ENCODE measurements at regions of chr6 and their contacts with region 1.

Region 1: GRCh38 chr6:73461537-73462350 is at the start of gene MTO1:
- DNase-seq: no peak
- ATAC-seq: peak; percentile 96
- H3K4me3 ChIP-seq: peak within 1 kb of the TSS; percentile 92
- H3K27ac ChIP-seq: peak within 1 kb of the TSS; percentile 87
- H3K4me1 ChIP-seq: peaks cover 10% of the 10 kb centered on the region
- H3K27me3 ChIP-seq: no peaks in the 10 kb centered on the region
- CTCF ChIP-seq: no peak
- EP300 ChIP-seq: no peak
- POLR2A ChIP-seq: peak; percentile 89
- RAD21 ChIP-seq: no peak
- polyA plus RNA-seq, gene MTO1: 24.8 to 28.0 TPM

Region 2: DNA sequence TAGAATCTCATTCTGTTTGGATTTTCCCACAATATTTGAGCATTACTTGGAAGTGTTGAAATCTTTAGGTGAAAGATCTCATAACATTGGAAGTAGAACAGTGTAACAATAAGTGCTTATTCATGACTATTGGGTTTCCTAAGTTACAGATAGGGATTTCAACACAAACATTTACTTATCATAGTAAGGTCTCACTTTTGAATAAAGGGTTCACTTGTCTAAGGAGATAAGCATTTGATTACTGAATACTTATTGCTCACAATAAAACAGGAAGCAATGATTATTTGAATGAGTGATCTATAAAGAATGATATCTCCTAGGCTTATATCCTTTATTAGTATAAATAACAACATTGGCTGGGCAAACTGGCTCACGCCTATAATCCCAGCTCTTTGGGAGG is 52.3 kb before region 1 on chr6:
- CTCF ChIA-PET with region 1: no interaction called
- POLR2A ChIA-PET with region 1: no interaction called
- RAD21 ChIA-PET with region 1: no interaction called
- SMC1A ChIA-PET with region 1: no interaction called
- in situ Hi-C with region 1: no loop called
- intact Hi-C with region 1: no loop called
- DNase-seq: no peak
- ATAC-seq: no peak
- H3K4me3 ChIP-seq: no peak overlapping the region
- H3K27ac ChIP-seq: no peak overlapping the region
- H3K4me1 ChIP-seq: no peaks in the 10 kb centered on the region
- H3K27me3 ChIP-seq: no peaks in the 10 kb centered on the region
- CTCF ChIP-seq: no peak
- EP300 ChIP-seq: no peak
- POLR2A ChIP-seq: no peak
- RAD21 ChIP-seq: no peak

Region 3: DNA sequence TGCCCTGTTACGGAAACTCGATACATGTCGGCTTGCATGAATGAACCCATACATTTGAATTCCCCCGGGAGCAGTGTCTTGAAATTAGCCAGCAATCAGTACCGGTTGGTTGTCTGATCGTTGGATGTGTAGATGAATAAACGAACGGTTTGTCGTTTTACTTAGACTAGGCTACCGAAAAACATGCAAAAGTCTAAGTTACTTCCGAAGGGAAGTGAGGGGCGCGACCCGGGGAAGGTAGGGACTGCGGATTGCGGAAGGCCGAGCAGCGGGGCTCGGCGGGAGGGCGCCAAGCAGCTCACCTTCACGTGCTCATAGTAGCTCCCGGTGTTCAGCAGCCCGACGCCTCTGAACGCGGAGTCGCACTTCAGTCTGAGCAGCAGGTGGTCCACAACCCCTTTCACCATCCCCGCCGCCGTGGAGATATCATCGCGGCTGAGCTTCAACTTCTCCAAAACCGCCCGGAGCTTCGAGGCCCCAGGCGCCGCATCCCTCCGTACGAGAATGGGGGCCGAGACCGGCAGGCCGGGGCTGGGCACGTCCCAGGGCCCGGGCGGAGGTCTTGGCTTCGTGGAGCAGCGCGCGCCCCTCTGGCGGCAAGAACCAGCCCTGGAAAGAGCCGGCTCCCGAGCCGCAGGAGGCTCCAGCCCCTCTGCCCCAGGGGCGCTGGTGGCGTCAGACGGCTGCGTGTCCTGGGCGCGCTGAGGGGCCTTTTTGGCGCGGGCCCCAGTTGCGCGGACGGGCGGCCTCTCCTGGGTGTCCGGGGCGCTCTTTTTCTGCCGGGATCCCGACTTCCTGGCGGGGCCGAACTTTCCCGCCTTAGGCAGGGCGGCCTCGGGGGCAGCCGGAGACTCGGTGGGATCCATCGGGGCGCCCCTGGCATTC is 10.3 kb before region 1 on chr6:
- CTCF ChIA-PET with region 1: interaction called, 31 read pairs
- POLR2A ChIA-PET with region 1: interaction called, 42 read pairs
- RAD21 ChIA-PET with region 1: interaction called, 42 read pairs
- SMC1A ChIA-PET with region 1: interaction called, 23 read pairs
- in situ Hi-C with region 1: no loop called
- intact Hi-C with region 1: no loop called
- DNase-seq: no peak
- ATAC-seq: peak; percentile 72
- H3K4me3 ChIP-seq: peak overlapping the region; percentile 91
- H3K27ac ChIP-seq: peak overlapping the region; percentile 95
- H3K4me1 ChIP-seq: 0 out of 2 replicates have a peak, but pooled peaks cover 3% of the 10 kb centered on the region
- H3K27me3 ChIP-seq: no peaks in the 10 kb centered on the region
- CTCF ChIP-seq: no peak
- EP300 ChIP-seq: no peak
- POLR2A ChIP-seq: peak; percentile 84
- RAD21 ChIP-seq: no peak

Region 4: GRCh38 chr6:73471686-73472290 is 10.0 kb after region 1 on chr6:
- CTCF ChIA-PET with region 1: interaction called, 27 read pairs
- POLR2A ChIA-PET with region 1: interaction called, 32 read pairs
- RAD21 ChIA-PET with region 1: interaction called, 44 read pairs
- SMC1A ChIA-PET with region 1: interaction called, 54 read pairs
- in situ Hi-C with region 1: no loop called
- intact Hi-C with region 1: no loop called
- DNase-seq: peak; percentile 58
- ATAC-seq: peak; percentile 98
- H3K4me3 ChIP-seq: peak overlapping the region; percentile 48; the same call in 1 of the 2 replicates
- H3K27ac ChIP-seq: peak overlapping the region; percentile 90
- H3K4me1 ChIP-seq: peaks cover 15% of the 10 kb centered on the region
- H3K27me3 ChIP-seq: no peaks in the 10 kb centered on the region
- CTCF ChIP-seq: no peak
- EP300 ChIP-seq: peak; percentile 43 to 89; a peak in 3 of 4 replicates
- POLR2A ChIP-seq: no peak
- RAD21 ChIP-seq: no peak

Region 5: GRCh38 chr6:73580247-73581149 is 118.8 kb after region 1 on chr6:
- CTCF ChIA-PET with region 1: no interaction called
- POLR2A ChIA-PET with region 1: interaction called, 10 read pairs
- RAD21 ChIA-PET with region 1: interaction called, 10 read pairs
- SMC1A ChIA-PET with region 1: interaction called, 12 read pairs
- in situ Hi-C with region 1: no loop called
- intact Hi-C with region 1: no loop called
- DNase-seq: peak; percentile 61
- ATAC-seq: peak; percentile 92
- H3K4me3 ChIP-seq: peak overlapping the region; percentile 34; the same call in 1 of the 2 replicates
- H3K27ac ChIP-seq: peak overlapping the region; percentile 96
- H3K4me1 ChIP-seq: peaks cover 20% of the 10 kb centered on the region
- H3K27me3 ChIP-seq: no peaks in the 10 kb centered on the region
- CTCF ChIP-seq: peak; percentile 42 to 53 (median 46); a peak in 5 of 6 replicates
- EP300 ChIP-seq: no peak
- POLR2A ChIP-seq: peak; percentile 71
- RAD21 ChIP-seq: 0 out of 2 replicates have a peak, but pooled peaks have one; percentile 36

Region 6: DNA sequence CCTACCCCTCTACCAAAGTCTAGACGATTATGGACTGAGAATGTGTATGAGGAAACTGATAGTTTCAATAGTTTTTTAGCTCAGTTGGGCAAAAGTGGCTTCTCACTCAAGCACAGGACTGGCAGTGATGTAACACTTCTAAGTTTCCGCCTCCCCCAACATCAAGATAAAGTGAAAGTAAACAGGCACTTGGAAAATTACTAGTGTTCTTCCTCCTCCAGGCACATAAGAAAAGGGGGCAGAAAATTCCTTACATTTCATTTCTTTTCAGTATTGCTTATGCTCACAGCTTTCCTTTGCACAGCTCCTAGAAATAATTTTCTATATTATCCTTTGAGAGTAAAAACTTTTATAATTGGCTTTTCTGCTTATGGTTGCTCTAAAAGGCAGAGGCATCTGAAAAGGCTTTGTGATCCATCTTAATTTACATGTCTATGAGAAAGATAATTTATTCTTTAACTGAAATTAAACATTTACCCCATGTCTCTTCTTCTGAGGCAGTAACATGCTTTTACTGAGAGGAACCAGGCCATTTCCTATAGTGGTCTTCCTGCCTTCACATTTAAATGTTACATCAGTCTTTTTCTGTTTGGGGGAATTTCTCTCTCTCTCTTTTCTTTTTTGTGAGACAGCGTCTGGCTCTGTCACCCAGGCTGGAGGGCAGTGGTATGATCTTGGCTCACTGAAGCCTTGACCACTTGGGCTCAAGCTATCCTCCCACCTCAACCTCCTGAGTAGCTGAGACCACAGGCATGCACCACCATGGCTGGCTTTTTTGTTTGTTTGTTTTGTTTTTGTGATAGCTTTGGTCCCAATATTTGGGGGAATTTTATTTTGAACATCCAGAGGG is 124.0 kb after region 1 on chr6:
- CTCF ChIA-PET with region 1: no interaction called
- POLR2A ChIA-PET with region 1: interaction called, 10 read pairs
- RAD21 ChIA-PET with region 1: interaction called, 10 read pairs
- SMC1A ChIA-PET with region 1: interaction called, 12 read pairs
- in situ Hi-C with region 1: no loop called
- intact Hi-C with region 1: no loop called
- DNase-seq: peak; percentile 66
- ATAC-seq: peak; percentile 87
- H3K4me3 ChIP-seq: peak overlapping the region; percentile 29
- H3K27ac ChIP-seq: peak overlapping the region; percentile 95
- H3K4me1 ChIP-seq: peaks cover 18% of the 10 kb centered on the region
- H3K27me3 ChIP-seq: no peaks in the 10 kb centered on the region
- CTCF ChIP-seq: no peak
- EP300 ChIP-seq: peak in 1 of 2 experiments; percentile 39; a peak in 1 of 4 replicates
- POLR2A ChIP-seq: no peak
- RAD21 ChIP-seq: no peak